Head of caudate nucleus (tissue), 42 donors: ENCODE measurements at regions of chrX and their contacts with region 1.

Region 1: DNA sequence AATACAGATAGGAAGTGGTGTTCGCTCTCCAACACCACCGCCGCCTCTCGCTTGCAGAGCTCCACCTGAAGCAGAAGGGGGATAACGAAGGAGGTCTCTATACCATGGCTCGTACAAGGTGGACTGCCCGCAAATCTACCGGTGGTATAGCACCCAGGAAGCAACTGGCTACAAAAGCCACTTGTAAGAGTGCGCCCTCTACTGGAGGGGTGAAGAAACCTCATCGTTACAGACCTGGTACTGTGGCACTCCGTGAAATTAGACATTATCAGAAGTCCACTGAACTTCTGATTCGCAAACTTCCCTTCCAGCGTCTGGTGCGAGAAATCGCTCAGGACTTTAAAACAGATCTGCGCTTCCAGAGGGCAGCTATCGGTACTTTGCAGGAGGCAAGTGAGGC is 5.2 kb upstream of the BMP15 start:
- DNase-seq: peak in 1 of 42 donors; percentile 7

Region 2: DNA sequence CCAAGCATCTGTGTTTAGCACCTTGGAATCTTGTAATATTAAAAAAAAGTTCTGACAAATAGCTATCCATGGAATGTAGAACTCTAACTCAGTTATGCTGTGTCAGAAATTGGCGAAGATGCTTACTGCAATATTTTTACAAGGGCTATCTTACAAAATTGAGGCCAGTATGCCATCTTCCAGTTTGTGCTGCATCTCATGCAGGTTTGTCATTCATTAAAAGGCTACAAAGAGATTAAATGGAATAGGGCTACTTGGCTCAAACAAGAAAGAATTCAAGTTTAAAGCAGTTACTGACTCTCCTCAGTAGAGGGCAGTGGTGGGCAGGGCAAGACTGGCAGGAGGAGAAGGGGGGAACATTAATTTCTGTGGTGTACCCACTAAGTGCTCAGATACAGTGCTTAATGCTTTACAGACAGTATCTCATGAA is 157.8 kb before region 1 on chrX:
- intact Hi-C with region 1: loop called (anchors 10 kb)
- DNase-seq: peak in 24 of 42 donors; percentile 4 to 64 (median 18)

Region 3: DNA sequence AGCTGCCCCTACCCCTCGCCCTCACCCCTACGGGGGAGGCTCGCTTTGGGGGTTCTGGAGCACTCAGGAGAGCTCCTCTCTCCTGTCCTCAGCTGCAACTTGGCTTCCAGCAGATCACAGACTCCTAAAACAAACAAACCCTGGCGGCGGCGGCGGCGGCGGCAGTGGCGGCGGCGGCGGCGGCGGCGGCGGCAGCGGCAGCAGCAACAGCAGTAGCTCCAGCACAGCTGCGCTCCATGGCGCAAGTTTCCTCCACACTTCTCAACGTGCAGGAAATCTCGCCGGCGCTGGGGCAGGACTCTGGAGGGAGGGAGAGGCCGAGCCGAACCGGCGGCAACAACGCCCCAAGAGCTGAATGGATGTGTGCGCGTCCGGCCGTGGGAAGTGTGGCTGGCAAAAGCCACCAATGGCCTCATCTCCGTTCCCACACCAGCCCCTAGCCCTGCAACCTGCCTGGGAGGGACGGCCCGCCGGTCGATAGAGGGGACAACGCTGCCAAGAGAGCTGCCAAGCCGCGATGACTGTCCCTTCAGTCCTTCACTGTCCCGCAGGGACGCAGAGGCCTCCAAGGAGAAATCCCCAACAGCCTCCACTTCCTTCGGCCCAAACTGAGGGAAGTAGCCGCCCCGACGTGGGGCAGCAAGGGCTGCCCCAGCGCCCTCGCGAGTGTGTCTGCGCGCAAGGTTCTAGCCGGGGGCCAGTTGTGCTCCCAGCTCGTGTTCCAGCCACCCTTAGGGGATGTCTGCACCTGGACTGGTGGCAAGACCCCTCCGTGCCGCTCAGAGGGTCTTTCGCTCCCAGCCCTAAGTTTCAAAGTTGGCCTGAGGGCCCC is 92.1 kb before region 1 on chrX:
- intact Hi-C with region 1: loop called (anchors 10 kb)
- DNase-seq: peak in 36 of 42 donors; percentile 5 to 53 (median 21)

Region 4: DNA sequence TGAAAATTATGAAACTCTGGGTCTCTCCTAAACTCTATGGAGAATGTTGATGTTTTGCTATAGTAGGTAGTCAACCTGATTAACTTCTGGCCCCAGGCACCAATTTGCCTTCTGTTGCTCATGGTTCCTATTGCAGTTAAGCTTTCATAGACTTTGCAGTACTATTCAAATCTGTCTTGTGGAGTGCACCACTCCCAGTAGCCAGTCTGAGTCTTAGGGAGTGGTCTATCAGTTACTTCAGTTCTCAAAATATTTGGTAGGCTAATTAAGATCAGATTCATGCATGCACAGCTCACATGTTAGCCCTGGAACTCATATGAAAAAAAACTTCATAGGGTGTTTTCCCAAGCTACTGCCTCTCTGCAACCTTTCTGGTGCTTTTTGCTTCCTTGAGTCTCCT is 58.5 kb after region 1 on chrX:
- intact Hi-C with region 1: no loop called
- DNase-seq: no peak

Region 5: GRCh38 chrX:50978920-50979682 is 73.8 kb after region 1 on chrX:
- intact Hi-C with region 1: no loop called
- DNase-seq: no peak

Region 6: DNA sequence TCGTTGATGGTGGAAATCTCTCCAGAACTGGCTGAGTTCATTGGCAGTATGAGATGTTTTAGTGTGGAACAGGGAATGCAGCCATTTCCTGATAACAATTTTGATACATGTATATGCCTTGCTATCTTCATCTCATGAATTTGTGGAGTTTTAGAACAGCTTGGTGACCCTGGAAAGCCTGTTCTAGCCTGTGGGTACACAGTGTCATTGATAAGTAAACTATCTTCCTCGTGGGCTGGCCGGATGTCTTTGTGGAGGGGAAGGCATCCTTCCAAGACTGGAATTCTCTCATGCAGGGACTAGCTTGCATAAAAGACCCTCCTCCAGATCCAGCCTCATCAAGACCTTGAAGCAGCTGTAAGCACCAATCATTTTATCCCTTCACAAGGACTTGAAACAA is 387.1 kb after region 1 on chrX:
- intact Hi-C with region 1: no loop called
- DNase-seq: no peak